GM12878 (cell line): ENCODE measurements at regions of chr20 and their contacts with region 1.

Region 1: DNA sequence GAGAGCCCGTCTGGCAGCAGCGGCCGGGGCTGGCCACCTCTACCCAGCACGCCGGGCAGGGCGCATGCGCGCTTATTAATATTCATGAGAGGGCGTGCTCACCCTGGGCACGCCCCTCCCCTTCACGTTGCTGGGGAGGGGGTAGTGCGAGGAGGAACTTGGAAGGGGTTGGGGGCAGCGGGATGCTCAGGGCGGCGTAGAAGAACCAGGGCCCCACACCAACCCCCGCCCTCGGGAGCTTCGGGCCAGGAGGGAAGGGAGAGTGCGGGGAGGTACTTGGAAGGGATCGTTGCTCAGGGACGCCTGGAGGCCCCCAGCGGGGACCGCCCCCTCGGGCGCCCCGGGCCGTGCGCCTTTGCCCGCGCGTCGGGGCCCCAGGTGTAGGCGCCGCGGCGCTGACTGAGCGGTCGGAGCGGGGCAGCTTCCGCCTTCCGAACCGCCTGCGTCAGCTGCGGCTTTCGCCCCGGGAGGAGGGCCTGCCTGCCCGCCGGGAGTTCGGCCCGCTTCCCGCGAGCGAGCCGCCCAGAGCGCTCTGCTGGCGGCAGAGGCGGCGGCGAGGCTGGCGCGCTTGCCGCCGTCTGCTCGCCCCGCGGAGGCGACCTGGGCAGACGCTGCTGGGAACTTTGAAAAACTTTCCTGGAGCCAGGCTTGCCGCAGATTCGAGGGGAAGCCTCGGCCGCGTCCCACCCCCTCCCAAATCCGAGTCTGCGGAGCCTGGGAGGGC is at the start of gene JAG1:
- DNase-seq: peak; percentile 60
- ATAC-seq: peak; percentile 64
- H3K4me3 ChIP-seq: peak within 1 kb of the TSS; percentile 81
- H3K27ac ChIP-seq: peak within 1 kb of the TSS; percentile 66
- H3K4me1 ChIP-seq: peaks cover 27% of the 10 kb centered on the region
- H3K27me3 ChIP-seq: peaks cover 0 to 5% of the 10 kb centered on the region in 2 experiments; a peak in 2 of 4 replicates
- CTCF ChIP-seq: no peak
- EP300 ChIP-seq: no peak
- POLR2A ChIP-seq: peak; percentile 72
- RAD21 ChIP-seq: no peak
- polyA plus RNA-seq, gene JAG1: 0.66 to 1.0 TPM

Region 2: DNA sequence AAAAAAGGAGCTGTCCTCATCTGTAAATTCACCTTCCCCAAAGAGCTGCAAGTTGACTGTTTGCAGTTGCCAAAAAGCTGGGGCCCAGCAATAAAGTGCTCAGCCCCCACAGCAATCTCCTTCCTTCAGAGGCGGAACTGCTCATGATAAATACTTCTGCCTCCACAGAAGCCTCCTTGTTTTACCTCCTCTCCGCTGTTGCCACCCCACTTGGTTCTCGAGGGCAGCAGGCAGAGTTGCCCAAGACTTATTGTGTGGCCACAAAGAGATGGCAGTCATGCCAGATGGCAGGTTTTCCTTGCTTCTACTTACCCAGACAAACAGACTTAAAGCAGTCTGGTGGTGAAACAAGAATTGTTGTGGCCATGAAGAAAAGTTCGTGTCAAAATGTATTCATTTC is 172.7 kb before region 1 on chr20:
- CTCF ChIA-PET with region 1: no interaction called
- POLR2A ChIA-PET with region 1: no interaction called
- RAD21 ChIA-PET with region 1: no interaction called
- SMC1A ChIA-PET with region 1: no interaction called
- in situ Hi-C with region 1: no loop called
- intact Hi-C with region 1: no loop called
- DNase-seq: no peak
- ATAC-seq: no peak
- H3K4me3 ChIP-seq: no peak overlapping the region
- H3K27ac ChIP-seq: no peak overlapping the region; the same call in 1 of the 2 replicates
- H3K4me1 ChIP-seq: no peaks in the 10 kb centered on the region
- H3K27me3 ChIP-seq: no peaks in the 10 kb centered on the region
- CTCF ChIP-seq: no peak
- EP300 ChIP-seq: no peak
- POLR2A ChIP-seq: no peak
- RAD21 ChIP-seq: no peak

Region 3: DNA sequence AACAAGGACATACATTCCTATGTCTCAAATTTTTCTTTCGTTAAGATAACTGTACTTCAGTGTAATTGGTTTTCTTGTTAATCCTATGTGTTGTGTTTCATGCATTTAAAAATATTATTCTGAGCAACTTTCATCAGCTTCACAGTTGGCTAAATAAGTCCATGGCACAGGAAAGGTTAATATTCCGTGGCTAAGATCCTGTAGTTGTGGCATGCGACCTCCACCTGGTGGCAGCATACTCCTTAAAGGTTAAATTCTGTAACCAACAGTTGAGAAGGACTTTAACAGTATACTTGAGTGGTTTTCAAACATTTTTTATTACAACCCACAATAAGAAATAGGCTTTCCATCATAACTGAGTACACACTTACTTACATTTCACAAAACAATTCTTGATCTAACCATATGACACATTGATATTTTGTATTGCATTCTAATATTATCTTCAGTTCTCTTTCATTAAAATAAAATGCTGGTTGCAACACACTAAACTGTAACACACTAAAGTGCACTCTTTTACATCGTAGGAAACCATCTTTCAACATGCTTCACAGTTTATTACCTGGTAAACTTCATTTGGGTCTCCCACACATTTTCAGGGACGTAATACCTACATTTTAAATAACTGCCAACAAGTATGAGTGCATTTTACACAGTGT is 120.7 kb before region 1 on chr20:
- CTCF ChIA-PET with region 1: interaction called, 14 read pairs
- POLR2A ChIA-PET with region 1: interaction called, 4 read pairs
- RAD21 ChIA-PET with region 1: interaction called, 21 read pairs
- SMC1A ChIA-PET with region 1: interaction called, 8 read pairs
- in situ Hi-C with region 1: no loop called
- intact Hi-C with region 1: loop called (anchors 2 kb)
- DNase-seq: no peak
- ATAC-seq: peak; percentile 77
- H3K4me3 ChIP-seq: no peak overlapping the region
- H3K27ac ChIP-seq: no peak overlapping the region
- H3K4me1 ChIP-seq: peaks cover 30% of the 10 kb centered on the region
- H3K27me3 ChIP-seq: no peaks in the 10 kb centered on the region
- CTCF ChIP-seq: peak; percentile 76 to 85 (median 83)
- EP300 ChIP-seq: no peak
- POLR2A ChIP-seq: no peak
- RAD21 ChIP-seq: peak; percentile 94

Region 4: DNA sequence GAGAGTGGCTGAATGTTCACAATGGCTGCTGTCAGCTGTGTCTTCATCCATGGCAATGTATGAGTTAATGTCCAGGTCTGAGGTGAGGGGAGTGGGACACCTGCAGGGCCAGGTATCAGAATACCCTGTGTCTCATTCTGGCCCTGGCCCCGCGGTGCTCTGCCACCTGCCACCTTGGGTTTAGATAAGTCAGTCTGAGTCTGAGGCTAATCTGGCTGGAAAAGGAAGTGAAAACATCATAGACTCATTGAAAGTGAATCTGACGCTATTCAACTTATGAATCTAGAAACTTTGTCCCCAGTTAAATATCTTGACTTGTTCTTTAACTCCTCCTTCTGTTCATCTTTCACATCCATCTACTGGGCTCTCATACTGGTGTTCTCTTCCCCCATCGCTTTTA is 266.8 kb after region 1 on chr20:
- CTCF ChIA-PET with region 1: interaction called, 3 read pairs
- POLR2A ChIA-PET with region 1: no interaction called
- RAD21 ChIA-PET with region 1: no interaction called
- SMC1A ChIA-PET with region 1: interaction called, 3 read pairs
- in situ Hi-C with region 1: no loop called
- intact Hi-C with region 1: loop called (anchors 2 kb)
- DNase-seq: peak; percentile 56
- ATAC-seq: peak; percentile 99
- H3K4me3 ChIP-seq: no peak overlapping the region
- H3K27ac ChIP-seq: no peak overlapping the region; the same call in 1 of the 2 replicates
- H3K4me1 ChIP-seq: peaks cover 9% of the 10 kb centered on the region
- H3K27me3 ChIP-seq: no peaks in the 10 kb centered on the region
- CTCF ChIP-seq: peak in 1 of 3 experiments; percentile 7; a peak in 1 of 6 replicates
- EP300 ChIP-seq: peak in 1 of 2 experiments; percentile 91; a peak in 3 of 4 replicates
- POLR2A ChIP-seq: no peak
- RAD21 ChIP-seq: no peak

Region 5: GRCh38 chr20:10961651-10962288 is 287.6 kb after region 1 on chr20:
- CTCF ChIA-PET with region 1: no interaction called
- POLR2A ChIA-PET with region 1: no interaction called
- RAD21 ChIA-PET with region 1: no interaction called
- SMC1A ChIA-PET with region 1: no interaction called
- in situ Hi-C with region 1: no loop called
- intact Hi-C with region 1: no loop called
- DNase-seq: no peak
- ATAC-seq: no peak
- H3K4me3 ChIP-seq: no peak overlapping the region
- H3K27ac ChIP-seq: no peak overlapping the region
- H3K4me1 ChIP-seq: no peaks in the 10 kb centered on the region
- H3K27me3 ChIP-seq: no peaks in the 10 kb centered on the region
- CTCF ChIP-seq: no peak
- EP300 ChIP-seq: no peak
- POLR2A ChIP-seq: no peak
- RAD21 ChIP-seq: no peak

Region 6: GRCh38 chr20:11204926-11205768 is 531.0 kb after region 1 on chr20:
- CTCF ChIA-PET with region 1: interaction called, 5 read pairs
- POLR2A ChIA-PET with region 1: no interaction called
- RAD21 ChIA-PET with region 1: interaction called, 17 read pairs
- SMC1A ChIA-PET with region 1: interaction called, 5 read pairs
- in situ Hi-C with region 1: no loop called
- intact Hi-C with region 1: loop called (anchors 2 kb)
- DNase-seq: peak; percentile 50
- ATAC-seq: peak; percentile 99
- H3K4me3 ChIP-seq: no peak overlapping the region
- H3K27ac ChIP-seq: no peak overlapping the region
- H3K4me1 ChIP-seq: no peaks in the 10 kb centered on the region
- H3K27me3 ChIP-seq: no peaks in the 10 kb centered on the region; a peak in 1 of 4 replicates
- CTCF ChIP-seq: peak; percentile 80 to 89 (median 84)
- EP300 ChIP-seq: no peak
- POLR2A ChIP-seq: no peak
- RAD21 ChIP-seq: peak; percentile 81

Region 7: GRCh38 chr20:11401988-11402387 is 727.8 kb after region 1 on chr20:
- CTCF ChIA-PET with region 1: no interaction called
- POLR2A ChIA-PET with region 1: no interaction called
- RAD21 ChIA-PET with region 1: no interaction called
- SMC1A ChIA-PET with region 1: interaction called, 3 read pairs
- in situ Hi-C with region 1: no loop called
- intact Hi-C with region 1: loop called (anchors 10 kb)
- DNase-seq: peak; percentile 27
- ATAC-seq: peak; percentile 93
- H3K4me3 ChIP-seq: peak overlapping the region; percentile 28; the same call in 1 of the 2 replicates
- H3K27ac ChIP-seq: no peak overlapping the region
- H3K4me1 ChIP-seq: no peaks in the 10 kb centered on the region
- H3K27me3 ChIP-seq: no peaks in the 10 kb centered on the region
- CTCF ChIP-seq: no peak
- EP300 ChIP-seq: no peak
- POLR2A ChIP-seq: no peak
- RAD21 ChIP-seq: no peak